CD4-positive, alpha-beta T cell (primary cell): ENCODE measurements at regions of chrX and their contacts with region 1.

Region 1: GRCh38 chrX:37825209-37825842 is 22.0 kb downstream of the DYNLT3 start:
- DNase-seq: peak; percentile 22 to 75 (median 36)
- ATAC-seq: peak; percentile 76
- H3K4me3 ChIP-seq: no peak overlapping the region
- H3K4me3 Mint-ChIP-seq: no peak overlapping the region
- H3K27ac ChIP-seq: no peak overlapping the region
- H3K27ac Mint-ChIP-seq: no peak overlapping the region
- H3K4me1 ChIP-seq: peaks cover 12% of the 10 kb centered on the region
- H3K4me1 Mint-ChIP-seq: peaks cover 33% of the 10 kb centered on the region
- H3K27me3 ChIP-seq: no peaks in the 10 kb centered on the region
- H3K27me3 Mint-ChIP-seq: no peaks in the 10 kb centered on the region
- CTCF ChIP-seq: peak; percentile 77

Region 2: DNA sequence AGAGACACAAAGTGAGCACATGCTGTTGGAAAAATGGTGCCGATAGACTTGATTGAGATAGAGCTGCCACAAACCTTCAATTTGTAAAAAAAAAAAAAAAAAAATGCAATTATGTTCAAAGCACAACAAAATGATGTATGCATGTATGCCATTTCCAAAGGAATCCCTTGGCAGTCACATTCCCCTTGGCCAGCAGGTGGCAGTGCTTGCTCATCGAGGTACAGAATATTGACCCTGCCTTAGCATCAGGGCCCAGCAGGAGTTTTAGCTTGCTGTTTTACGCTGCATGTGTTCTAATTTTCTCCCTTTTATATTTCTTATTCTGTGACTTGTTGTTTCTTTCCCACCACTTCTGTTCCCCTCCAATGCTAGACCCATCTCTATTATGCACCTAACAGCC is 80.0 kb before region 1 on chrX:
- CTCF ChIA-PET with region 1: interaction called, 47 read pairs
- POLR2A ChIA-PET with region 1: interaction called, 24 read pairs
- intact Hi-C with region 1: loop called (anchors 1 kb)
- DNase-seq: peak; percentile 57 to 85 (median 72)
- ATAC-seq: peak; percentile 84
- H3K4me3 ChIP-seq: no peak overlapping the region
- H3K4me3 Mint-ChIP-seq: peak overlapping the region; percentile 4
- H3K27ac ChIP-seq: no peak overlapping the region
- H3K27ac Mint-ChIP-seq: no peak overlapping the region
- H3K4me1 ChIP-seq: peaks cover 15% of the 10 kb centered on the region
- H3K4me1 Mint-ChIP-seq: peaks cover 14% of the 10 kb centered on the region
- H3K27me3 ChIP-seq: no peaks in the 10 kb centered on the region
- H3K27me3 Mint-ChIP-seq: no peaks in the 10 kb centered on the region
- CTCF ChIP-seq: peak; percentile 66

Region 3: GRCh38 chrX:37787423-37787869 is 37.9 kb before region 1 on chrX:
- CTCF ChIA-PET with region 1: no interaction called
- POLR2A ChIA-PET with region 1: no interaction called
- intact Hi-C with region 1: loop called in 1 of 2 experiments (anchors 5 kb)
- DNase-seq: peak in 3 of 14 experiments; percentile 19 to 35 (median 20)
- ATAC-seq: no peak
- H3K4me3 ChIP-seq: no peak overlapping the region
- H3K4me3 Mint-ChIP-seq: peak overlapping the region; percentile 4
- H3K27ac ChIP-seq: no peak overlapping the region
- H3K27ac Mint-ChIP-seq: peak overlapping the region; percentile 82
- H3K4me1 ChIP-seq: peaks cover 17% of the 10 kb centered on the region
- H3K4me1 Mint-ChIP-seq: peaks cover 45% of the 10 kb centered on the region
- H3K27me3 ChIP-seq: no peaks in the 10 kb centered on the region
- H3K27me3 Mint-ChIP-seq: no peaks in the 10 kb centered on the region
- CTCF ChIP-seq: no peak

Region 4: DNA sequence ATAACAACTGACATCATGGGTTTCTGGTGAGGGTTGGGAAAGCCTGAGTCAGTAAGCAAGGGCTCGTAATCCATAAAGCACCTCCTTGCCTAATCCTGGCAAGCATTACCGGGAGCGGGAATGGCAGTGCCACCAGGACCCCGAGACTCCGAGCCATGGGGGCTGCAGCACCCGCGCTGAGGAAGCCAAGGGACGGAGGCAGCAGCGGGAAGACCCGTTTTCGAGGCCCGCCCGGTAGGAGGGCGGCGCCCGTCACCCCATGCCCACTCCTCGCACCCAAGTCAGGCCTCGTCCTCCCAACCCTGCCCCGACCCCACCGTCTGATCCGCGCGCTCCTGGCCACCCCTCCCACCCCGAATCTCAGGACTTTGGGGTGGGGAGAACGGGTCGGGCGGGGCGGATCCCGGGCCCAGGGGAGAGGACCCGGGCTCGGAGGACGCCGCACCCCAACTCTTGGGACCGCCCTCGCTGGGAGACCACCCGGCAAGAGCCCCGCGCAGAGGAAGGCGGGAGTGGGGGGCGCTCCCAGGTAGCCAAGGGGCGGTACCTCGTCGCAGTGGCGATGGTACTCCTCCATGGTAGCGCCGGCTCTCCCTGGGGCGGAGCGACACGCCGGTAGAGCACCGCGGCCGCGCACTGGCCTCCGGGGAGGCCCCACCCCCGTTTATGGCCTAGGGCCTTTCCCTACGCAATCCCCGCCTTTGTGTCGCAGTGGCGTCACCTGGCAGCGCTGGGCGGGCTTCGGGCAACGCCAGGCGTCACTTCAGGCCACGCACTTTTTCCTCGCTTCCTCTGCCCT is 21.8 kb after region 1 on chrX and contains the start of gene DYNLT3:
- CTCF ChIA-PET with region 1: interaction called, 4 read pairs
- POLR2A ChIA-PET with region 1: no interaction called
- intact Hi-C with region 1: loop called in 1 of 2 experiments (anchors 2 kb)
- DNase-seq: peak; percentile 51 to 92 (median 71)
- ATAC-seq: peak; percentile 92
- H3K4me3 ChIP-seq: peak within 1 kb of the TSS; percentile 78
- H3K4me3 Mint-ChIP-seq: peak within 1 kb of the TSS; percentile 89
- H3K27ac ChIP-seq: peak within 1 kb of the TSS; percentile 83 to 94
- H3K27ac Mint-ChIP-seq: peak within 1 kb of the TSS; percentile 97
- H3K4me1 ChIP-seq: peaks cover 20% of the 10 kb centered on the region
- H3K4me1 Mint-ChIP-seq: peaks cover 52% of the 10 kb centered on the region
- H3K27me3 ChIP-seq: no peaks in the 10 kb centered on the region
- H3K27me3 Mint-ChIP-seq: no peaks in the 10 kb centered on the region
- CTCF ChIP-seq: no peak
- total RNA-seq, gene DYNLT3: 47.9 to 48.3 TPM